Sciatic nerve (tissue), 2 donors: ENCODE measurements at regions of chr6 and their contacts with region 1.

Region 1: GRCh38 chr6:17890309-17890708 is 97.1 kb downstream of the KIF13A start:
- DNase-seq: no peak
- ATAC-seq: no peak

Region 2: DNA sequence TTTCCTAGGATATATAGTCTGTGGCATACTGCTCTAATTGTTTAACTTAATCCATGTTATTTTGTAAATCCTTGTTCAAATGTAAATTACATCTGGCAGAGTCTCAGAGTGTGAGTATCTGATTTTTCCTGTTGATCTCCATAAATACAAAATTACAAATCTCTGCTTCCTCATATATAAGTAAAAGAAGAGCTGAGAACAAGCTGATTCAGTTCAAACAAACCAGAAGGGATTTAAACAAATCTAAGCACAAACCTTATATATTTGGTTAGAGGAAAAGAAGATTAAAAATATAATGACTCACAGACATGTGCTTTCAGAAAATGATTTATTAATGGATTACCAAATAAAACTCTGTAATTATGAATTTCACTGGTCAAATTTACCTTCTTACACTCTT is 59.8 kb after region 1 on chr6:
- intact Hi-C with region 1: no loop called
- DNase-seq: no peak
- ATAC-seq: no peak

Region 3: DNA sequence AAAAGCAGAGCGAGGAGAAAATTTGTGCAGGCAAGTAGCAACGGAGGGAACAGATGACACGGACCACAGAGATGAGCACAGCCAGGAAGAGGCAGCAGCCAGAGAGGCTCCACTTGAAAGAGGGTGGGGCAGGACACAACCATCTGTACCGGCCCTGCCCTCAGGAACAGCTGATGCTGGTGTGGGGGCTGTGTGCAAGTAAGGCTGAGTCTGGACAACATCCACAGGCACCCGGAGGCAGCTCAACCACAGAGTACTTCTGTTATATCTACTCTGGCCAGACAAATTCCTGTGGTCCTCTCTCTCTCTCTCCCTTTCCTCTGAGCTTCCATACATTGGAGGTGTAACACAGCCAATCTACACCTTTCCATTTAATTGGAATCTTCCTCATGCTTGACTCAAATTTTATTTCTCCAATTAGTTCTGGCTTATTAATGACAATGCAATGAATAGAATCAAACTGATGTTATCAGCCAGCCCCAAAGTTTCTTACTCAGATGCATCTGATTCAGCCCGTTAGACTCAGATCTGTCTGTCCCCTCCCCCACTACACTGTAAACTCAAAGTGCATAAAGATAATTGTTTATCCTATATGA is 72.2 kb after region 1 on chr6:
- intact Hi-C with region 1: loop called (anchors 2 kb)
- DNase-seq: no peak
- ATAC-seq: peak; percentile 89